IMR-90 (cell line): ENCODE measurements at regions of chr7 and their contacts with region 1.

Region 1: DNA sequence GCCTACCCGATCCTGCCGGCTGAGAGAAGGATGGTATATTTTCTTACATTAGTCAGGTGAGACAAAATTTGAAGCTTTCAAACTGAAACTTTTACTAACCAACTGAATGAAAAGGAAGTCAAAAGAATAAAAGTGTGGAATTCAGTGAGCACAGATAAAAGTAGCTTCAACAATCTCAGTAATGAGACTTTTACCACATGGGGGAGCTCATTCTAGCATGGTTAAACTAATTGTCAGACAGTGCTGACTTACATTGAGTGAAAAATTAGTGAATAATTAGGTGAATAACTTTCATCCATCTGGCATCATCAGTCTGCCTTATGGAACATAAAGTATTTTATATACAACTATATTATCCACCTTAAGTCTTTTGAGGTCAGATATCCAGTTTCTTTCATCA is 8.4 kb downstream of the FAM237B start:
- DNase-seq: no peak
- ATAC-seq: no peak
- H3K4me3 ChIP-seq: no peak overlapping the region
- H3K27ac ChIP-seq: no peak overlapping the region
- H3K4me1 ChIP-seq: no peaks in the 10 kb centered on the region
- H3K27me3 ChIP-seq: peaks cover 1% of the 10 kb centered on the region; the same call in 1 of the 2 replicates
- CTCF ChIP-seq: peak; percentile 28
- POLR2A ChIP-seq: no peak
- RAD21 ChIP-seq: peak; percentile 18; the same call in 1 of the 2 replicates

Region 2: GRCh38 chr7:90244909-90245851 is 67.6 kb before region 1 on chr7 and contains the start of gene CFAP69:
- CTCF ChIA-PET with region 1: no interaction called
- POLR2A ChIA-PET with region 1: no interaction called
- dilution Hi-C with region 1: no loop called
- in situ Hi-C with region 1: no loop called
- intact Hi-C with region 1: no loop called
- DNase-seq: peak; percentile 78
- ATAC-seq: peak; percentile 97
- H3K4me3 ChIP-seq: peak within 1 kb of the TSS; percentile 92
- H3K27ac ChIP-seq: peak within 1 kb of the TSS; percentile 43
- H3K4me1 ChIP-seq: no peaks in the 10 kb centered on the region
- H3K27me3 ChIP-seq: no peaks in the 10 kb centered on the region; the same call in none of the 2 replicates
- CTCF ChIP-seq: peak; percentile 24; the same call in 1 of the 2 replicates
- POLR2A ChIP-seq: no peak
- RAD21 ChIP-seq: peak; percentile 7; the same call in 1 of the 2 replicates
- total RNA-seq, gene CFAP69: 0.72 and 1.7 TPM in 2 replicates

Region 3: DNA sequence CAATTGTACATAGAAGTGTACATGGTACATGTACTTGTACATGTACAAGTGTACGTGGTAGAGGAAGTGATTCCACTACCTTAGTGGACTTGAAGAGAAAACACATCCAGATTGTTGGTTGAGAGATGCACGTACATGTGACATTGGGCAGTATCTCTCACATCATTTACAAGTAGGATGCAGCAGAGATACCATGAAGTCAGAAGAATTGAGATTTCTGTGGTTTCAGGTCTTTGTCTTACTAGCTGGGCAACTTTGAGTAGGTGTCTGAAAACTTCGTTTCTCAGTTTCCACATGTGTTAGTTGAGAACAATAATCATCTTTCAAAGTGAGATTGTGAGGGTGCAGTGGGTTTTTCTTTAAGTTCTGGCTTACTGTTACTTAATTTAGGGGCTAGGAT is 112.0 kb after region 1 on chr7:
- CTCF ChIA-PET with region 1: interaction called, 3 read pairs
- POLR2A ChIA-PET with region 1: no interaction called
- dilution Hi-C with region 1: no loop called
- in situ Hi-C with region 1: no loop called
- intact Hi-C with region 1: loop called (anchors 2 kb)
- DNase-seq: no peak
- ATAC-seq: no peak
- H3K4me3 ChIP-seq: no peak overlapping the region
- H3K27ac ChIP-seq: no peak overlapping the region
- H3K4me1 ChIP-seq: no peaks in the 10 kb centered on the region
- H3K27me3 ChIP-seq: no peaks in the 10 kb centered on the region
- CTCF ChIP-seq: no peak
- POLR2A ChIP-seq: no peak
- RAD21 ChIP-seq: no peak